ENCODE measurements at regions of chr12 and their contacts with region 1.

Region 1: GRCh38 chr12:48977315-48978281 is 524 bp upstream of the WNT1 start:
- DNase-seq: peak; percentile 77 to 87 (median 80)
- H3K4me3 ChIP-seq: peak overlapping the region; percentile 89
- H3K4me3 Mint-ChIP-seq: peak overlapping the region; percentile 63 to 73 (median 71)
- H3K27ac ChIP-seq: no peak overlapping the region
- H3K27ac Mint-ChIP-seq: peak overlapping the region in 7 of 8 donors; percentile 36 to 93 (median 87)
- H3K4me1 ChIP-seq: peaks cover 49% of the 10 kb centered on the region
- H3K4me1 Mint-ChIP-seq: peaks cover 43 to 58% (median 51%) of the 10 kb centered on the region in 3 donors
- H3K27me3 ChIP-seq: peaks cover 25% of the 10 kb centered on the region
- H3K27me3 Mint-ChIP-seq: peaks cover 12 to 22% of the 10 kb centered on the region in 2 donors

Region 2: DNA sequence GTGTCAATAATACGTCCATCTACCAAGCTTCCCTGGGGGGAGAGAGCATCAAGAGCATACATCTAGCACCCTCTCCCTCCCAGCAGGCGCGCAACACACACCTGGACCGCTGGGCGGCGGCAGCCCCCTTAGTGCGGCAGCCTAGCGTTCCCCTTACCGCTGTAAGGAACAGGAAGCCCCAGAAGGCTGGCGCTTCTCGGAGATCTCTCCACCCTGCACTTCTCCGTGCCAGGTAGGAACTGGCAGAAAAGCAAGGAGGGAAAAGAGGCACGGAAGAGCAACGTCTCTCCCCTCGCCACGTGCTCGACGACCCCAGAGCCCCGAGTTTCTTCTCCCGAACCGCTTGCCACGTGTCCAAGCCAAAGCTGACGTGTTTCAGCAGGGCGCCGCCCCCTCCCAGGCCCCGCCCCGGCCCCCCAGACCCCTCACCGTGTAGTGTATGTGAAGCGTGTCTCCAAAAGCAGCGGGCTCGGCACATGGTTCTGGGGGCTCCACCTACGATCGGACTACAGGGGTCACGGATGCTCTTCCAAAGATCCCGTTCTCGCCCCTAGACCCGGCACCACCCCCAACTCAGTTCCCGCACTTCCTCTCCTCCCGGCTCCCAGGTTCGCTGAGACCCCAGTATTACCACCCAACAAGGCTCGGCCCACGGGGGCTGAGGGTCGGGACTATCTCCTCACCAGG is 52.8 kb before region 1 on chr12:
- CTCF ChIA-PET with region 1: interaction called, 39 read pairs
- POLR2A ChIA-PET with region 1: interaction called, 9 read pairs
- DNase-seq: peak; percentile 63 to 86 (median 81)
- H3K4me3 ChIP-seq: peak overlapping the region; percentile 96
- H3K4me3 Mint-ChIP-seq: peak overlapping the region; percentile 88 to 98 (median 96)
- H3K27ac ChIP-seq: peak overlapping the region; percentile 90
- H3K27ac Mint-ChIP-seq: peak overlapping the region; percentile 91 to 100 (median 98)
- H3K4me1 ChIP-seq: peaks cover 12% of the 10 kb centered on the region
- H3K4me1 Mint-ChIP-seq: peaks cover 53 to 64% (median 62%) of the 10 kb centered on the region in 3 donors
- H3K27me3 ChIP-seq: no peaks in the 10 kb centered on the region
- H3K27me3 Mint-ChIP-seq: no peaks in the 10 kb centered on the region

Measured in CD8-positive, alpha-beta memory T cell (primary cell).